Breast epithelium (tissue), 4 donors: ENCODE measurements at regions of chr3 and their contacts with region 1.

Region 1: DNA sequence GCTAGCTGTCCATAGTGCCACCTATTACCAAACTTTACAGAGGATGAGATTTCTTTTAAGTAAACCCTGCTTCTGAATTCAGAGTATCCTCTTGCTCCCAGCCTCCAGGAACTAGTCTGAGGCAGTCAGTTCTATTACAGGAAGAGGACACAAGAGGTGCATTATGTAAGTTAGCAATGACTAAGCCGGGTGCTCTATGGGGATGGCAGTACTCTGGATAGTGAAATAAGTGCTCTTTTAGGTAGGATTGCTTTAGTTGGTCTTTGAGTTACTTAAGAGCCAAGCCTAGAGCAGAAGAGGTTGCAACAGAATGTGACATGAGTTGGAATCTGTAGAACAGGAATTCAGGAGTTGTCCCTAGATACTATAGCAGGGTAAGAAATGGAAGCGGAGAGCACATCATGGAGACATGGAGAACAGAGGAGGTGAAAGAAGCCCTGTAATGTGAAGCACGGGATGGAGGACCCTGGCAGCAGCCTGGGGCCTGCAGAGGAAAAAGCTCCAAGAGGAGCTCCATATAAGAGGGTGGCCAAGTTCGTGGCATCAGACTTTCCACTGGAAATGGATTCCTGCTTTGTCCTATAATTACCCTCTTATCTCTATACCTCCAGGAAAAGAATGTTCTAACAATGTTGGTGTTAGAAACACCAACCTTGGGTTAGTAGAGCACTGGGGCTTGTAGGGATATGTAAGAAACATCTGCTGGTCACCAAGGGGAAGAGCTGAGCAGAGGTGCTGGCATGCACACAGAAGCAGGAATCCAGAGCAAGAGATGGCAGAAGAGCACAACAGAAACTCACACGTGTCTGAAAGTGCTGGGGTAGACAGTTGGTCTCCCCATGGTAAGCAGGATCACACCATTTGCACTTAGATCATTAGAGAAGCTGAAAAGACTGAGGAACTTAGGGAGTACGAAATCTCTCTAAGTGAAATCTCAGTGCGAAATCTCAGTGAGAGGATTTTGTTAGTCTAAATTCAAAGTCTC is 851.1 kb downstream of the FHIT start:
- DNase-seq: no peak
- H3K4me3 ChIP-seq: no peak overlapping the region
- H3K27ac ChIP-seq: no peak overlapping the region
- H3K4me1 ChIP-seq: no peaks in the 10 kb centered on the region
- H3K27me3 ChIP-seq: no peaks in the 10 kb centered on the region
- CTCF ChIP-seq: no peak
- POLR2A ChIP-seq: no peak

Region 2: DNA sequence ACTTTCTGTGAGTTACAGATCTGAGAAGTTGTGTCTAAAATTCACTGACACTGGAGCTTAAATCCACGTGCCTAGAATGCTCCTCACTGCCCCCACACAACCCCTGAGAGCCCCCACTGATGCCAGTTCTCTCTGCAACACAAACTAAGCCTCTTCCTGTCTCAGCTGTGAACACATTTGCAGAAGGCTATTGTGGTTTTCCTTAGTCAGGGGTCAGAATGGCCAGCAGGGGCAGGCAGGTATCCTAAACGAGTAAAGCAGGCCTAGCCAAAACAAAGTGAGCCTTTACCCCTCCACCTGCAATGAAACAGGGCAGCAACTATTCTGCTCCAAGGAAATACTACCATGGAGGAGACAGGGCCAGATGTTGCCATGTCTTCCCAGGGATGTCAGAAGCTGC is 772.5 kb after region 1 on chr3:
- intact Hi-C with region 1: loop called (anchors 5 kb)
- DNase-seq: no peak
- H3K4me3 ChIP-seq: no peak overlapping the region
- H3K27ac ChIP-seq: no peak overlapping the region
- H3K4me1 ChIP-seq: no peaks in the 10 kb centered on the region
- H3K27me3 ChIP-seq: no peaks in the 10 kb centered on the region
- CTCF ChIP-seq: no peak
- POLR2A ChIP-seq: no peak